Panc1 (cell line): ENCODE measurements at regions of chr15 and their contacts with region 1.

Region 1: DNA sequence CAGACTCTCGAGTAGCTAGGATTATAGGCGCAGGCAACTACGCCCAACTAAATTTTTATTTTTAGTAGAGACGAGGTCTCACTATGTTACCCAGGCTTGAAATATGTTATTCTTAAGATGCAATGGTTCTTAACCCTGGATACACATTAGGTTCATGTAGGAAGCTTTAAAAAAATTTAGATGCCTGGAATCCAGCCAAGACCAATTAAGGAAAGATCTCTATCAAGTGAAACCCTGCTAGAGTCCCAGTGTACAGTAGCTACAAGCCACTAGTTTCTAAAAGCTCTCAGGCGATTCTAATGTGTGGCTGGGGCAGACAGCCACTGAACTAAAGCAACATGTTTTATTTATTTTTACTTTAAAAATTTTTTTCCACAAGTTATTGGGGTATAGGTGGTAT is 33.2 kb downstream of the TRIM69 start:
- DNase-seq: no peak
- ATAC-seq: no peak
- H3K4me3 ChIP-seq: no peak overlapping the region
- H3K27ac ChIP-seq: no peak overlapping the region
- H3K4me1 ChIP-seq: no peaks in the 10 kb centered on the region
- H3K27me3 ChIP-seq: no peaks in the 10 kb centered on the region
- CTCF ChIP-seq: no peak

Region 2: DNA sequence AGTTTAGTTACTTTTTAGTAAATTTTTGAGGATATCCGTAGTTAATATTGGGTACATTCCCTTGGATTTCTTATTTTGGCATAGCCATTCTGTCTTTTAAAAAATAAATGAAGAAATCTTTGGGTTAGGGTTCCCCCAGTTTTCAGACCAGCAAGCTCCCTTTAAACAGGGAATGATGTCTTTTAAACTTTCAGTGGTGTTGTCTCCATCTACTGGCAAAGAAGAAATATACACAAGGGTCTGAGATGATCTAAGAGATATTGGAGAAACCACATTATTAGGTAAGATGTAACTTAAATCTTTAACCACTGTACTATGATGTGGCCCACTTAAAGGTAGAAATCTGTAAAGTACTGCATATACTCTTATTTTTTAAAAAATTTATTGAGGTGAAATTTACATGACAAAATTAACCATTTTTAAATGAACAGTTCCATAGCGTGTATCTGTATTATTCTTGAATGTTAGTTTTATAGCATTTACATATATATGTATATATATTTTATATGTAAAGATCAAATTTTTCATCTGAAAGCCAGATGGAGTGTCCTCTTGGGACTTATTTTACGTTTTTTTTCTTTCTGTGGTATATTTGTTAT is 267.7 kb before region 1 on chr15:
- CTCF ChIA-PET with region 1: no interaction called
- POLR2A ChIA-PET with region 1: interaction called, 13 read pairs
- in situ Hi-C with region 1: no loop called
- intact Hi-C with region 1: no loop called
- DNase-seq: no peak
- ATAC-seq: peak; percentile 68; the same call in 1 of the 2 replicates
- H3K4me3 ChIP-seq: no peak overlapping the region
- H3K27ac ChIP-seq: no peak overlapping the region
- H3K4me1 ChIP-seq: no peaks in the 10 kb centered on the region
- H3K27me3 ChIP-seq: no peaks in the 10 kb centered on the region
- CTCF ChIP-seq: peak; percentile 71; the same call in 1 of the 2 replicates

Region 3: GRCh38 chr15:44545913-44546802 is 223.4 kb before region 1 on chr15:
- CTCF ChIA-PET with region 1: no interaction called
- POLR2A ChIA-PET with region 1: interaction called, 12 read pairs
- in situ Hi-C with region 1: no loop called
- intact Hi-C with region 1: no loop called
- DNase-seq: no peak
- ATAC-seq: no peak
- H3K4me3 ChIP-seq: no peak overlapping the region
- H3K27ac ChIP-seq: no peak overlapping the region
- H3K4me1 ChIP-seq: 0 out of 2 replicates have a peak, but pooled peaks cover 6% of the 10 kb centered on the region
- H3K27me3 ChIP-seq: no peaks in the 10 kb centered on the region
- CTCF ChIP-seq: peak; percentile 59; the same call in 1 of the 2 replicates